B cell (primary cell): ENCODE measurements at regions of chr6 and their contacts with region 1.

Region 1: DNA sequence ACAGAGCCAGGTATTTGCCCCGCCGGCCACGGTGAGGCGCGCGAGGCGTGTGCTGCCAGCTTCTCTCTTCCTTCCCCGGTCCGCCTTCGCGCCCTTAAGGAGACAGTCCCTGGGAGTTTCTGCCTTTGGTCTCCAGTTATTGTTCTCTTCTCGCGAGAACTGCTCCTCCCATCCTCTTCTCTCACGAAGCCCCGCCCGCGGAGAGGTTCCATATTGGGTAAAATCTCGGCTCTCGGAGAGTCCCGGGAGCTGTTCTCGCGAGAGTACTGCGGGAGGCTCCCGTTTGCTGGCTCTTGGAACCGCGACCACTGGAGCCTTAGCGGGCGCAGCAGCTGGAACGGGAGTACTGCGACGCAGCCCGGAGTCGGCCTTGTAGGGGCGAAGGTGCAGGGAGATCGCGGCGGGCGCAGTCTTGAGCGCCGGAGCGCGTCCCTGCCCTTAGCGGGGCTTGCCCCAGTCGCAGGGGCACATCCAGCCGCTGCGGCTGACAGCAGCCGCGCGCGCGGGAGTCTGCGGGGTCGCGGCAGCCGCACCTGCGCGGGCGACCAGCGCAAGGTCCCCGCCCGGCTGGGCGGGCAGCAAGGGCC is at the start of gene MAPK14:
- DNase-seq: peak; percentile 100
- ATAC-seq: peak; percentile 94
- H3K4me3 ChIP-seq: peak within 1 kb of the TSS; percentile 79 to 91 (median 87)
- H3K4me3 Mint-ChIP-seq: peak within 1 kb of the TSS; percentile 96
- H3K27ac ChIP-seq: peak within 1 kb of the TSS; percentile 61 to 64
- H3K27ac Mint-ChIP-seq: peak within 1 kb of the TSS; percentile 94
- H3K4me1 ChIP-seq: peaks cover 29 to 35% of the 10 kb centered on the region in 2 donors
- H3K4me1 Mint-ChIP-seq: peaks cover 38% of the 10 kb centered on the region
- H3K27me3 ChIP-seq: peaks cover 0 to 19% (median 16%) of the 10 kb centered on the region in 4 experiments
- H3K27me3 Mint-ChIP-seq: peaks cover 20% of the 10 kb centered on the region
- CTCF ChIP-seq: peak; percentile 86
- total RNA-seq, gene MAPK14: 49.9 and 50.4 TPM in 2 replicates

Region 2: GRCh38 chr6:35452186-35453090 is 575.2 kb before region 1 on chr6 and contains the start of gene FANCE:
- CTCF ChIA-PET with region 1: no interaction called
- POLR2A ChIA-PET with region 1: no interaction called
- intact Hi-C with region 1: loop called (anchors 5 kb)
- DNase-seq: peak; percentile 90
- ATAC-seq: peak; percentile 92
- H3K4me3 ChIP-seq: peak within 1 kb of the TSS; percentile 70 to 89 (median 79)
- H3K4me3 Mint-ChIP-seq: peak within 1 kb of the TSS; percentile 86
- H3K27ac ChIP-seq: peak within 1 kb of the TSS; percentile 23 to 25
- H3K27ac Mint-ChIP-seq: peak within 1 kb of the TSS; percentile 63
- H3K4me1 ChIP-seq: peaks cover 14 to 21% of the 10 kb centered on the region in 2 donors
- H3K4me1 Mint-ChIP-seq: peaks cover 33% of the 10 kb centered on the region
- H3K27me3 ChIP-seq: no peaks in the 10 kb centered on the region
- H3K27me3 Mint-ChIP-seq: no peaks in the 10 kb centered on the region
- CTCF ChIP-seq: no peak
- total RNA-seq, gene FANCE: 12.7 and 12.8 TPM in 2 replicates

Region 3: GRCh38 chr6:35876902-35877301 is 150.7 kb before region 1 on chr6:
- CTCF ChIA-PET with region 1: no interaction called
- POLR2A ChIA-PET with region 1: no interaction called
- intact Hi-C with region 1: no loop called
- DNase-seq: no peak
- ATAC-seq: no peak
- H3K4me3 ChIP-seq: no peak overlapping the region
- H3K4me3 Mint-ChIP-seq: no peak overlapping the region
- H3K27ac ChIP-seq: no peak overlapping the region
- H3K27ac Mint-ChIP-seq: no peak overlapping the region
- H3K4me1 ChIP-seq: no peaks in the 10 kb centered on the region
- H3K4me1 Mint-ChIP-seq: no peaks in the 10 kb centered on the region
- H3K27me3 ChIP-seq: no peaks in the 10 kb centered on the region
- H3K27me3 Mint-ChIP-seq: no peaks in the 10 kb centered on the region
- CTCF ChIP-seq: no peak

Region 4: DNA sequence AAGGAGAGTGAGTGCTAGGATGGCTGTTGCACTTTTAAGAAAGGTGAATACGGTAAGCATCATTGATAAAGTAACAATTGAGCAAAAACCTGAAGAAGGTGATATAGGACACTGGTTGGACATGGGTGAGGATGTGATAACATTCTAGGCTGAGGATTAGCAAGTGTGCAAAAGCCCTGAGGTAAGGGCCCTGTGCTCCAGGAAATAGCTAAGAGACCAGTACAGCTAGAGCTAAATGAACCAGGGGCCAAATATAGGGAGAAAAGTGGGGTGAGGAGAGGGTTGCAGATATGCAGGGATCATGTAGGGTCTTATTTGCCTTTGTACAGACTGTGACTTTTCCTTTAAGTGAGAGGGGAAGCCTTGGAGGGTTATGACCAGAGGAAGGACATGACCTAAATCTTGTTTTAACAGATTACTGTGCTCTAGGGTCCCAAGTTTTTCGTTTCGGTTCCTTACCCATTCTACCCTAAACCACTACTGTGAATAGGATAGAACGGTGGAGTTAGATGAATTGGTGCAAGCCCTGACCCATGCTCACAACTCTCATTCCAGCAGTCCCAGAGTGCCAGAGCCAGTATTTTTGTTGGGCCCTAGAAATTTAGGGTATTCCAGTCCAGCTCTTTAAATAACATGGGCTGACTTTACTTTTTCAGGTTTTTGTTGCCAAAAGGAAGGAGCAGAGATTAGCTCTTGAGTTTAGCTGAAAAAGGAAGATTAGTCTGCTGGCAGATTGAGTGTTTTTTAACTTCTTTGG is 10.7 kb after region 1 on chr6:
- CTCF ChIA-PET with region 1: interaction called, 11 read pairs
- POLR2A ChIA-PET with region 1: no interaction called
- intact Hi-C with region 1: no loop called
- DNase-seq: no peak
- ATAC-seq: no peak
- H3K4me3 ChIP-seq: no peak overlapping the region
- H3K4me3 Mint-ChIP-seq: peak overlapping the region; percentile 8
- H3K27ac ChIP-seq: no peak overlapping the region
- H3K27ac Mint-ChIP-seq: no peak overlapping the region
- H3K4me1 ChIP-seq: peaks cover 19 to 30% of the 10 kb centered on the region in 2 donors
- H3K4me1 Mint-ChIP-seq: peaks cover 63% of the 10 kb centered on the region
- H3K27me3 ChIP-seq: no peaks in the 10 kb centered on the region
- H3K27me3 Mint-ChIP-seq: no peaks in the 10 kb centered on the region
- CTCF ChIP-seq: no peak

Region 5: DNA sequence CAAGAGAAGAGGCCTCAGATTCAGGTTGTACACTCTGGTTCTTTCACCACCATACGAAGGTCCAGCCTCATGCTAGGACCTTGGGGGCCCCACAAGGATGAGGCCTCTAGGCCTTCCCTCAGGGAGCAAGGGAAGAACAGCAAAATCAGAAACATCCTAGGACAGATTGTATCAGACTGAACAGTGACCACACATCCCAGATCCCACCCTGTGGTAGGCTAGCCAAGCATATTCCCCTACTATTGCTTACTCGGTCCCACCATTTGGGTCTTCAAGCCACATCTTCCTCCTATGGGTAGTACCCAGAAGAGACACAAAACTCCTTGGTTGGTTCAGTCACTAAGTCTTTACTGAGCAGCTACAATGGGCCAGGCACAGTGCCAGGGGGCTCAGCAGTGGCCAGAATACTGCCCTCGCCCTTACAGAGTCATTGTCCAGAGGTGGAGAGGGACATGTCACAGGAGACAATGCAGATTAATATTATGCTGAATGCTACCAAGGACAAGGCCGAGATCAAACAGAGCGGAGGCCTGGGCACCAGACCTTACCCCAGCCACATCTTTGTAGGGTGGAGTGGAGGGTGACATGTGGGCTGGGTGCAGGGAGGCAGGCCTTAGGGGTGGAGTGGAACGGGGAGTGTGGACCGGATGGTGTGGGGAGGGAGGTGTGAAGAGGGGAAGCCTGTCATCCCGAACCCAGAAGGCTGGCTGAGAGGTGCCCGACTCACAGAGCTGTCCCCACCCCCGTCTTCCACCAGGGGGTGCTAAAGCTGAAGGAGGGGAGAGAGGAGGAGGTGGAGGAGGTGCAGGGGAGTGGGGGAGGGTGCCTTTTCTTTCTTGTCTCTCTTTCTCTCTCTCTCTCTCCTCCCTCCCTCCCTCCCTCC is 95.9 kb after region 1 on chr6:
- CTCF ChIA-PET with region 1: interaction called, 12 read pairs
- POLR2A ChIA-PET with region 1: interaction called, 5 read pairs
- intact Hi-C with region 1: loop called (anchors 2 kb)
- DNase-seq: peak; percentile 88
- ATAC-seq: peak; percentile 74
- H3K4me3 ChIP-seq: no peak overlapping the region
- H3K4me3 Mint-ChIP-seq: peak overlapping the region; percentile 12
- H3K27ac ChIP-seq: peak overlapping the region; percentile 62 to 95
- H3K27ac Mint-ChIP-seq: peak overlapping the region; percentile 88
- H3K4me1 ChIP-seq: peaks cover 57 to 70% of the 10 kb centered on the region in 2 donors
- H3K4me1 Mint-ChIP-seq: peaks cover 69% of the 10 kb centered on the region
- H3K27me3 ChIP-seq: no peaks in the 10 kb centered on the region
- H3K27me3 Mint-ChIP-seq: no peaks in the 10 kb centered on the region
- CTCF ChIP-seq: peak; percentile 64

Region 6: DNA sequence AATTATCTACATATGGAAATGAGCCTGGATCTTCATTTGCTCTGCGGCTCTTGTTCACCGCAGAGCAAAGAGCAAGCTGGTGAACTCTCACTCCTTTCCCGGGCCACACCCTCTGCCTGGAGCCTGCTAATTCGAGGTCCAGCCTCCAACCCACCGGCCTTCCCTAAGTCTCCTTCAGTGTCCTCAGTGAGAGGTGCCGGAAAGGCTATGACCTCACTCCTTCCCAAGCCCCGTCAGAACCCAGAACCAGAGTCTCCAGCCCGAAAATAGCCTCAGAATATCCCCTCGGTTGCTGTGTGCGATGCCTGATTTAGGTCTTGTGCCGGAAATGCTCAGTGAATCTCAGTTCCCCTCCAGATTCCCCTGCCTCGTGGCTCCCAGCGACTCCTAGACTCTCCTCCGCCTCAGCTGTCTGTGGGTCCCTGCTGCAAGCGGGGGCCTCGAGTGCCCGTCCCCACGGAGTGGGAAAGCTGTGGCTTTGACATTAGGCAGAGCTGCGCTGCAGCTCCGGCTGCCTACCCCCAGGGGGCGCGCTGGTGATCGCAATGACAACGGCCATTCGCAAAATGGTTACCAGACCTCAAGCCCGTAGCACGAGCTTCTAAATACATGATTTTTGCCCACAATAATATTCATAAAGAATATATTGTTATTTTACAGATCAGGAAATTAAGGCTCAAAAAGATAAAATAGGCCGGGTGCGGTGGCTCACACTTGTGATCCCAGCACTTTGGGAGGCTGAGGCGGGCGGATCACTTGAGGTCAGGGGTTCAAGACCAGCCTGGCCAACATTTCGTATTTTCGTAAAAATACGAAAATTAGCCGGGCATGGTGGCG is 313.2 kb after region 1 on chr6:
- CTCF ChIA-PET with region 1: interaction called, 4 read pairs
- POLR2A ChIA-PET with region 1: no interaction called
- intact Hi-C with region 1: loop called (anchors 5 kb)
- DNase-seq: peak; percentile 77
- ATAC-seq: peak; percentile 84
- H3K4me3 ChIP-seq: peak overlapping the region in 3 of 5 experiments; percentile 11 to 43 (median 27)
- H3K4me3 Mint-ChIP-seq: peak overlapping the region; percentile 84
- H3K27ac ChIP-seq: no peak overlapping the region
- H3K27ac Mint-ChIP-seq: peak overlapping the region; percentile 70
- H3K4me1 ChIP-seq: peaks cover 15 to 26% of the 10 kb centered on the region in 2 donors
- H3K4me1 Mint-ChIP-seq: peaks cover 18% of the 10 kb centered on the region
- H3K27me3 ChIP-seq: peaks cover 0 to 7% (median 0%) of the 10 kb centered on the region in 4 experiments
- H3K27me3 Mint-ChIP-seq: peaks cover 15% of the 10 kb centered on the region
- CTCF ChIP-seq: peak; percentile 99

Region 7: GRCh38 chr6:36594029-36594815 is 566.6 kb after region 1 on chr6 and contains the start of gene SRSF3:
- CTCF ChIA-PET with region 1: no interaction called
- POLR2A ChIA-PET with region 1: no interaction called
- intact Hi-C with region 1: loop called (anchors 5 kb)
- DNase-seq: peak; percentile 99
- ATAC-seq: peak; percentile 91
- H3K4me3 ChIP-seq: peak within 1 kb of the TSS; percentile 91 to 100 (median 97)
- H3K4me3 Mint-ChIP-seq: peak within 1 kb of the TSS; percentile 90
- H3K27ac ChIP-seq: peak within 1 kb of the TSS; percentile 93 to 99
- H3K27ac Mint-ChIP-seq: peak within 1 kb of the TSS; percentile 97
- H3K4me1 ChIP-seq: peaks cover 44 to 55% of the 10 kb centered on the region in 2 donors
- H3K4me1 Mint-ChIP-seq: peaks cover 48% of the 10 kb centered on the region
- H3K27me3 ChIP-seq: no peaks in the 10 kb centered on the region
- H3K27me3 Mint-ChIP-seq: no peaks in the 10 kb centered on the region
- CTCF ChIP-seq: peak; percentile 29
- total RNA-seq, gene SRSF3: 316 and 331 TPM in 2 replicates